ENCODE measurements at regions of chr10 and their contacts with region 1.

Region 1: DNA sequence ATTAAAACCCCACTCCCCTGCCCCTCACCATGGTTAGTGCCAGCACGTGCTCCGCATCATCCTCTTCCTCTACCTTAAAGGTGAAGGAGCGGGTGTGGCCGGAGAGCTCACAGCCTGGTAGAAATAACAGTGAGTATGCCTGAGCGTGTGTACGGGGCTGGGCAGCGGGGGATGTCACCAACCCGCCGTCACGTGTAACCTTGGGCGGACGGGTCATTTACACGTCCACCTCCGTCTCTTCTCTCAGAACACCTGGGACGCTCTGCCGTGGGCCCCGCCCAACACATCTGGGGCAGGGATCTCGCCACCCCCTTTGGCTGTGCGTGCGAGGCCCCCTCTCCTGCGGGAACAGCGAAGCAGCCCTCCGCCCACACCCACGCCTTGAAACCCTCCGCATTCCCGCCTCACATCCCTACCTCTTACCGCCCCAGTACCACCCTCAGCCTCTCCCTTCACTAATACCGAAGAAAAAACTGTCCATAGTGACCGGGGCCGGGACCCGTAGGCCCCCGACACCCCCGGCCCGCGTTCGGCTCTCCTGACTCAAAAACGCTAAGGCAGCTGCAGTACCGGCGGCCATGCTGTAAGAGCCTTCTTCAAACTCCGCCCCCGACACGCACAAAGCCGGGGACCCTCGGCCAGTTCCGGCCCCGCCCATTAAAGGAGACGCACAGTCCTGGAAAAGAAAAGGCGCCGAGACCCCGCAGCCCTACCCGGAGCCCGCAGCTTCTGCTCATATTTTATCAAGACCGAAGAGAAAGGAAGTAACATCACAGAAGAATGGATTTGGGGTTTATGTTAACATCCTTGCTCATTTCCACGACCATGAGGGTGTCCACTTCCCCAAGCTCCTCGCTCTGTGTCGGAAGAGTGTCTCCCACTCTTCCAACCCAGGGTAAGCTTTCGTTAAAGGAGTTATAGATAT is at the start of gene NPM3:
- DNase-seq: peak; percentile 94
- H3K27ac ChIP-seq: peak within 1 kb of the TSS; percentile 73
- CTCF ChIP-seq: no peak

Region 2: GRCh38 chr10:101602761-101603398 is 180.2 kb before region 1 on chr10:
- CTCF ChIA-PET with region 1: interaction called, 18 read pairs
- POLR2A ChIA-PET with region 1: no interaction called
- DNase-seq: peak; percentile 77
- H3K27ac ChIP-seq: no peak overlapping the region
- CTCF ChIP-seq: peak; percentile 73

Region 3: GRCh38 chr10:101858723-101859500 is 75.8 kb after region 1 on chr10:
- CTCF ChIA-PET with region 1: no interaction called
- POLR2A ChIA-PET with region 1: no interaction called
- DNase-seq: no peak
- H3K27ac ChIP-seq: no peak overlapping the region
- CTCF ChIP-seq: no peak